Naive thymus-derived CD8-positive, alpha-beta T cell (primary cell): ENCODE measurements at regions of chr10 and their contacts with region 1.

Region 1: DNA sequence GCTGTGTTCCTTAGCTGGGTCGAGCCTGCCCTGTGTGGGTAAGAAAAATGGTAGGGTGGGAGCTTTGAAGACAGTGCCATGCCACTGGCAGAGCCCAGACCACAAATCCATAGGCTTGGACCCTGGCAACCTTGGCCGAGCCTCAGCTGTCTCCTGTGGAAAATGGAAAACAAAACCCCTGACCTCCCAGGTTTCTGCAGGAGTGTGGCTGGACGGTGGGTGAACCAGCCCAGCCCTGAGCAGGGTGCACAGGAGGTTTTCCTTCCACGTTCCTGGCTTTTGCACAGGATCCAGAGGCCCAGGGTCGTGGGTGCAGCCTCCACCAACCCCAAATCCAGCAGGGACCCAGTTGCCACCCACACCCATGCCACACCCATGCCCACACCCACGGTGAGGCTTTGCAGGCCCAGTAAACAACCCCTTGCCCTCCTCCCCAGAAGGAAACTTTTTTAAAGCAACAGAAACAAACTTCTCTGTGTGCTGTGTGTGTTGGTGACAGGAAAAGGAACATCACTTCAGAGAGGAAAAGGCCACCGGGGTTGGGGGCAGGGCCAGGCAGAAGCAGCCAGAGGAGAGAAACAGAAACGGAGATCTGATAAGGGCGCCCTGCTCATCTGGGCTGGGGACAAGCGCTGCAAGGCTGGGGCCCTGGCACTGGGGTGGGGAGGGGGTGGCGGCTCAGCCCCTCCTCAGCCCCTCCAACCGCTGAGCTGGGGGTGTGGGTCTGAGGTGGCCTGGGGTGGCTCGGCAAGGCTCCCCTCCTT is 20.7 kb upstream of the ZMIZ1 start:
- DNase-seq: peak in 7 of 10 donors; percentile 38 to 82 (median 60)
- ATAC-seq: peak; percentile 86 to 88
- H3K4me3 Mint-ChIP-seq: peak overlapping the region; percentile 59 to 92 (median 82)
- H3K27ac Mint-ChIP-seq: peak overlapping the region; percentile 75 to 98 (median 94)
- H3K4me1 Mint-ChIP-seq: peaks cover 24 to 75% (median 70%) of the 10 kb centered on the region in 4 donors
- H3K27me3 Mint-ChIP-seq: no peaks in the 10 kb centered on the region

Region 2: GRCh38 chr10:79007421-79008319 is 40.4 kb before region 1 on chr10:
- POLR2A ChIA-PET with region 1: no interaction called
- DNase-seq: peak in 1 of 10 donors; percentile 16
- ATAC-seq: no peak
- H3K4me3 Mint-ChIP-seq: no peak overlapping the region
- H3K27ac Mint-ChIP-seq: peak overlapping the region in 3 of 10 donors; percentile 6 to 70 (median 7)
- H3K4me1 Mint-ChIP-seq: peaks cover 6 to 15% (median 9%) of the 10 kb centered on the region in 4 donors
- H3K27me3 Mint-ChIP-seq: peaks cover 0 to 5% (median 0%) of the 10 kb centered on the region in 5 donors

Region 3: DNA sequence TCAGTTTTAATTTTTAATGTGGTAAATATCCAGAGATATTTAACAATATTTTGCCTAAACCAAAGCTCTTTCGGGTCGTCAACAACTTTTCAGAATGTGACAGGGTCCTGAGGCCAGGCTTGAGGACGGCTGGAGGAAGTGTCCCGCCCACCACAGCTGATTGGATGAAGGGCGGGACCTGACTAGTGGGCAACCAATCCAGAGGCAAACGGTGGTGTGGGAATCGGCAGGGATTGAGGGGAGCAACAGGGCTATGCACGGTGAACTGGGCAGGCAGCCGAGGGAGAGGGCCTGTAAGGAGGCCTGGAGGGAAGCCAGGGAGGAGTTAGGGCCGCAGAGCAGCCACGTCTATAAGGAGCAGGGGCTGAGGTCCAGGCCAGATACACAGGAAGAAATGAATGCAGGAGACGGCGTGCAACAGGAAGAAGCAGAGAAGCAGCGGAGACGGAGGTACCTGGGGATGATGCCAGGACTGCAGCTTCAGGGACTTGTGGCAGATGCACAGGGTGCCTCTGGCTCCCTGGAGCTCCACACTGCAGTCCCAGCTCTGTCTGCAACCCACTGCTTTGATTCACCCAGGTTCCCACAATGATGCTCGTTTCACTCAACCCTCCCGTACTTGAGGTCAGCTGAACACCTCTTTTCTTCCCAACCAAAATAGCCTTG is 25.4 kb before region 1 on chr10:
- POLR2A ChIA-PET with region 1: interaction called, 17 read pairs
- DNase-seq: no peak
- ATAC-seq: no peak
- H3K4me3 Mint-ChIP-seq: peak overlapping the region in 3 of 10 donors; percentile 12 to 39 (median 26)
- H3K27ac Mint-ChIP-seq: peak overlapping the region in 4 of 10 donors; percentile 5 to 75 (median 48)
- H3K4me1 Mint-ChIP-seq: peaks cover 27 to 57% (median 37%) of the 10 kb centered on the region in 4 donors
- H3K27me3 Mint-ChIP-seq: no peaks in the 10 kb centered on the region